ENCODE measurements at regions of chr13 and their contacts with region 1.

Region 1: GRCh38 chr13:112469071-112469745 is 93.1 kb downstream of the SPACA7 start:
- DNase-seq: no peak
- H3K4me3 ChIP-seq: no peak overlapping the region
- H3K27ac ChIP-seq: no peak overlapping the region
- H3K27me3 ChIP-seq: no peaks in the 10 kb centered on the region
- CTCF ChIP-seq: no peak

Region 2: DNA sequence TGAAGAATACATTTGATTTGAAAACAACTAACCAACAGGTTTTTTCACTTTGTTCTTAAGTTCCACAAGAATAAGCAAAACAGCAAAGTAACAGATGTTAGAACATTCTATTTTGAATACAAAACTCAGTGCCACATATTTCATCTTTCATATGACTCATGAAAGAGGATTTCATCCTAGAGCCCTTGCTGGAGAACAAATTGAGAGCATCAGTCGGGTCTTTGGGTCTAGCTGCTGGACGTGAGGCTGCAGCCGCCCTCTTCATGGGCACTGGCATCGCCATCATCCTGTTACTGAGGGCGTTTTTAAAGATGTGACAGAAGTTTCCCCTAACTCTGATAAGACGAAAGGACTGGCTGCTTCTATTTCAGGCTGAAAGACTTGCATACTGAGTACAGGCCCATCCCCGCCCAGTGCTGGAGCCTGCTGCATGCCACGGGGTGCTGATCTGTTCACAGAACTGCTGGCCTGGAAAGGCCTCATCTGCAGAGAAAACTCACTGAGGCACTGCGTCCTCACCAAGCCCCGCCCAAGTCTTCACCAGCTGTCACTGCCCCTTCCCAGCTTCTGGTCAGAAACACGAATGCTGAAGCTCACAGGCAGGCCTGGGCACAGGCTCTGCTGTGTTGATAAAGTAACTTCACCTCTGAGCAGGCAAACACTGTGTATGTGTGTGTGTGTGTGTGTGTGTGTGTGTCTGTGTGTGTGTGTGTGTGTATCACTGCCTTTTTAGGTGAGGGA is 17.3 kb after region 1 on chr13:
- CTCF ChIA-PET with region 1: interaction called, 12 read pairs
- POLR2A ChIA-PET with region 1: no interaction called
- DNase-seq: no peak
- H3K4me3 ChIP-seq: no peak overlapping the region
- H3K27ac ChIP-seq: peak overlapping the region; percentile 11
- H3K27me3 ChIP-seq: no peaks in the 10 kb centered on the region
- CTCF ChIP-seq: no peak

Measured in AG04450 (cell line).